AG04449 (cell line): ENCODE measurements at regions of chr5 and their contacts with region 1.

Region 1: GRCh38 chr5:147391781-147392180 is 118.1 kb downstream of the DPYSL3 start:
- DNase-seq: peak; percentile 21
- H3K4me3 ChIP-seq: no peak overlapping the region
- CTCF ChIP-seq: peak; percentile 67

Region 2: GRCh38 chr5:147156012-147156411 is 235.8 kb before region 1 on chr5:
- CTCF ChIA-PET with region 1: no interaction called
- POLR2A ChIA-PET with region 1: no interaction called
- DNase-seq: no peak
- H3K4me3 ChIP-seq: no peak overlapping the region
- CTCF ChIP-seq: no peak

Region 3: DNA sequence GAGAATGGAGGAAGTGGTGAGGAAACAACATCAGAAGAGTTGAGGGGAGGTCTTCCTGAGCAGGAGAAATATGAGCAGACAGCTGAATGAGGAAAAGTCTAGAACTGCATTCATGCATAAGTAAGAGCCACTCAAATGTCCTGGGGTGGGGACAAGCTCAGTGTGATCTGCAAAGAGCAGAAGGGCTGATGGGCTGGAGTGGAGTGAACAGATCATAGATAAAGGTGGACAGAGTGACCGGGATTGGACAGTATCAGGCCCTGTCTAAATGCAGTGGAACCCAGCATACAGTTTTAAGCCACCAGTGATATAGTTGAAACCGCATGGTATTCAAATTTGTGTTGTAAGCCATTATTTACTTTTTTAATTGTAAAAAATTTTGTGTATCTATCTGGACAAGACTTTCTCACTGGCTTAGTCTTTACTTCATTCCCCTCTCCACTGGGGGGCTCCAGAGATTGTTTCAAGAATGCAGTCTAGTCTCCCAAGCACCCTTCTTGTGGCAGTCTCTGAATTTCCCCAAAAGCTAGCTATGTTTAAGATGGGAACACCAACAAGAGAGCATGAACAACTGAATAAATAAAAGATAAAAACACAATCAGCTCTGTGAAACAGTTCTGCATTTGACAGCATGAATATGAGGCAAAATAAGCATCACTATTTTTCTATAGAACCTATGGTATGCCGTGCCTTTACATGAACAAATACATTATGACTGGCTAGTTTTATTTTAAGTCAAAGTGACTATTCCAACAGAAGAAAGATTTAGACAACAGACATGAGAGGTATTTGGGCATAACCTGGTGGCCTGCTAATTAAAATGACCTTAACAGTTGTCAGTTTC is 167.6 kb before region 1 on chr5:
- CTCF ChIA-PET with region 1: interaction called, 23 read pairs
- POLR2A ChIA-PET with region 1: no interaction called
- DNase-seq: peak; percentile 7
- H3K4me3 ChIP-seq: no peak overlapping the region
- CTCF ChIP-seq: peak; percentile 52

Region 4: GRCh38 chr5:147403651-147404640 is 12.2 kb after region 1 on chr5:
- CTCF ChIA-PET with region 1: interaction called, 45 read pairs
- POLR2A ChIA-PET with region 1: no interaction called
- DNase-seq: peak; percentile 97
- H3K4me3 ChIP-seq: no peak overlapping the region
- CTCF ChIP-seq: no peak

Region 5: GRCh38 chr5:147699496-147700088 is 307.8 kb after region 1 on chr5:
- CTCF ChIA-PET with region 1: no interaction called
- POLR2A ChIA-PET with region 1: no interaction called
- DNase-seq: no peak
- H3K4me3 ChIP-seq: no peak overlapping the region
- CTCF ChIP-seq: no peak